ENCODE measurements at regions of chr7 and their contacts with region 1.

Region 1: GRCh38 chr7:83271212-83272099 is 108.8 kb upstream of the PCLO start:
- DNase-seq: peak in 1 of 2 donors; percentile 61
- H3K4me3 ChIP-seq: no peak overlapping the region
- H3K27ac ChIP-seq: no peak overlapping the region
- H3K4me1 ChIP-seq: no peaks in the 10 kb centered on the region
- H3K27me3 ChIP-seq: no peaks in the 10 kb centered on the region
- CTCF ChIP-seq: peak in 2 of 7 experiments; percentile 22 to 23
- EP300 ChIP-seq: no peak
- POLR2A ChIP-seq: no peak

Region 2: GRCh38 chr7:82789867-82790609 is 481.4 kb before region 1 on chr7:
- intact Hi-C with region 1: no loop called
- DNase-seq: no peak
- H3K4me3 ChIP-seq: no peak overlapping the region
- H3K27ac ChIP-seq: no peak overlapping the region
- H3K4me1 ChIP-seq: no peaks in the 10 kb centered on the region
- H3K27me3 ChIP-seq: no peaks in the 10 kb centered on the region
- CTCF ChIP-seq: no peak
- EP300 ChIP-seq: no peak
- POLR2A ChIP-seq: no peak

Region 3: DNA sequence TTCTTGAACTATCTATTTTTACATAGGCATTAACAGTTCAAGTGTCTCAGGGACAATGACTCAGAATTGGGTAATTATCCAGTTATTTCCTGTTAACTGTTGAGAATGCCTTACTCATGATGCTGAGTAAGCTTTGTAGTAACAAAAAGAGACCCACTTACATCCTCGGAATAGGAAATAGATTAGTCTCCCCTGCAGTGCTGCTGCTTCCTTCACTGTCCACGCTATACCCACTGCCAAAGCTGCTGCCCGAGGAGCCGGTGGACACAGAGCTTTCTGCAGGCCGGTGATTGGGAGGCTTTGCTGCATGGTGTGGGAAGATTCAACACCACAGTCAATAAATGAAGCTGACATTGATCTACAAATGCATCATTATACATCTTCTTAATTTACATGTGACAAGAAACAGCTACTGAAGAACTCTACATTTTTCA is 465.9 kb before region 1 on chr7:
- intact Hi-C with region 1: loop called (anchors 10 kb)
- DNase-seq: peak in 1 of 2 donors; percentile 16
- H3K4me3 ChIP-seq: no peak overlapping the region
- H3K27ac ChIP-seq: no peak overlapping the region
- H3K4me1 ChIP-seq: no peaks in the 10 kb centered on the region
- H3K27me3 ChIP-seq: no peaks in the 10 kb centered on the region
- CTCF ChIP-seq: no peak
- EP300 ChIP-seq: no peak
- POLR2A ChIP-seq: no peak